Activated CD4-positive, alpha-beta memory T cell treated with anti-CD3 and anti-CD28 coated beads for 36 hours (primary cell): ENCODE measurements at regions of chr7 and their contacts with region 1.

Region 1: DNA sequence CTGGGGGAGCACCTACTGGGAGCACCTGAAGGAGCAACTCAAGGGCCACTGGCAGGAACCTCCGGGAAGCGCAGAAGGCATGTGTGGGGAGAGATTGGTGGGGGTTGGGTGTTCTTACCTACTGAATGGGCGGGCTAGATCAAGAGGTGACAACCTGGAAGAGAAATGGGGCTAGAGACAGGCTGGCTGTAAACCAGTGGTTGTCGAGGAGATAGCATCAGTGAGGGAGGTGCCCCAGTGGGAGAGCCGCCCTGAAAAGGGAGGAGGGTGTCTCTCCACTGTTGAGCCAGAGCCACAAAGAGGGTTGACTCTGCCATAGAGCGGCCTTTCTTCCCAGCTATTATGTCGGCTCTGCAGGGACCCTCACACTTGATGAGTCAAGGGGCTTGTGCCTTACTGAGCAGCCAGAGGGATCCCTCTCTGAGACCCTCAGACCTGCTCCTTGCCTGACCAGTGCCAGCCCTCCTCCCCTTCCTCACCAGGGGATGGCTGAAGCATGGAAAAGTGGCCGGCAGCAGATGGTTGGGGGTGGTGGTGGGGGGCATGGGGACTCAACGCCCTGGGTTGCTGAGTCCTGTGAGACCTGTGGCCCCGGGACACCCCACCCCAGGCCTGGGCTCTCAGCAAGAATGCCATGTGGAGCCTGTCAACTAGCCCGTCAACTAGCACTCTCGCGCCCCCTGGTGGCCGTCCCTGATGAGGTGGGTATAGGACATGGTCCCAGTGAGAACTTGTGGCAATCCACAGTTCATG is 36.5 kb upstream of the PURB start:
- DNase-seq: peak; percentile 97
- H3K4me3 Mint-ChIP-seq: no peak overlapping the region
- H3K27ac Mint-ChIP-seq: no peak overlapping the region
- H3K4me1 Mint-ChIP-seq: peaks cover 15% of the 10 kb centered on the region
- H3K27me3 Mint-ChIP-seq: no peaks in the 10 kb centered on the region

Region 2: GRCh38 chr7:44587843-44588711 is 333.7 kb before region 1 on chr7:
- CTCF ChIA-PET with region 1: interaction called, 3 read pairs
- POLR2A ChIA-PET with region 1: no interaction called
- intact Hi-C with region 1: loop called (anchors 1 kb)
- DNase-seq: peak; percentile 73
- H3K4me3 Mint-ChIP-seq: no peak overlapping the region
- H3K27ac Mint-ChIP-seq: peak overlapping the region; percentile 33
- H3K4me1 Mint-ChIP-seq: peaks cover 8% of the 10 kb centered on the region
- H3K27me3 Mint-ChIP-seq: no peaks in the 10 kb centered on the region

Region 3: GRCh38 chr7:44858161-44858560 is 63.6 kb before region 1 on chr7:
- CTCF ChIA-PET with region 1: interaction called, 96 read pairs
- POLR2A ChIA-PET with region 1: no interaction called
- intact Hi-C with region 1: loop called (anchors 1 kb)
- DNase-seq: no peak
- H3K4me3 Mint-ChIP-seq: no peak overlapping the region
- H3K27ac Mint-ChIP-seq: no peak overlapping the region
- H3K4me1 Mint-ChIP-seq: peaks cover 14% of the 10 kb centered on the region
- H3K27me3 Mint-ChIP-seq: no peaks in the 10 kb centered on the region